Esophagus squamous epithelium (tissue), 5 donors: ENCODE measurements at regions of chr1 and their contacts with region 1.

Region 1: GRCh38 chr1:210407207-210407886 is 78.6 kb downstream of the HHAT start:
- DNase-seq: no peak
- H3K4me3 ChIP-seq: no peak overlapping the region
- H3K27ac ChIP-seq: no peak overlapping the region
- H3K4me1 ChIP-seq: peaks cover 0 to 26% (median 4%) of the 10 kb centered on the region in 3 donors
- H3K27me3 ChIP-seq: no peaks in the 10 kb centered on the region
- CTCF ChIP-seq: peak; percentile 81 to 97 (median 89)
- POLR2A ChIP-seq: no peak

Region 2: GRCh38 chr1:210358626-210359025 is 48.7 kb before region 1 on chr1:
- intact Hi-C with region 1: loop called (anchors 5 kb)
- DNase-seq: no peak
- H3K4me3 ChIP-seq: no peak overlapping the region
- H3K27ac ChIP-seq: no peak overlapping the region
- H3K4me1 ChIP-seq: peaks cover 5 to 28% (median 8%) of the 10 kb centered on the region in 3 donors
- H3K27me3 ChIP-seq: no peaks in the 10 kb centered on the region
- CTCF ChIP-seq: no peak
- POLR2A ChIP-seq: no peak

Region 3: GRCh38 chr1:210754878-210755665 is 347.7 kb after region 1 on chr1:
- intact Hi-C with region 1: no loop called
- DNase-seq: no peak
- H3K4me3 ChIP-seq: no peak overlapping the region
- H3K27ac ChIP-seq: peak overlapping the region in 2 of 4 donors; percentile 61 to 63
- H3K4me1 ChIP-seq: peaks cover 3 to 38% (median 11%) of the 10 kb centered on the region in 3 donors
- H3K27me3 ChIP-seq: no peaks in the 10 kb centered on the region
- CTCF ChIP-seq: no peak
- POLR2A ChIP-seq: no peak